GM10248 (cell line): ENCODE measurements at regions of chr9 and their contacts with region 1.

Region 1: GRCh38 chr9:86350006-86350760 is 4.0 kb downstream of the TUT7 start:
- DNase-seq: peak; percentile 46
- CTCF ChIP-seq: no peak

Region 2: DNA sequence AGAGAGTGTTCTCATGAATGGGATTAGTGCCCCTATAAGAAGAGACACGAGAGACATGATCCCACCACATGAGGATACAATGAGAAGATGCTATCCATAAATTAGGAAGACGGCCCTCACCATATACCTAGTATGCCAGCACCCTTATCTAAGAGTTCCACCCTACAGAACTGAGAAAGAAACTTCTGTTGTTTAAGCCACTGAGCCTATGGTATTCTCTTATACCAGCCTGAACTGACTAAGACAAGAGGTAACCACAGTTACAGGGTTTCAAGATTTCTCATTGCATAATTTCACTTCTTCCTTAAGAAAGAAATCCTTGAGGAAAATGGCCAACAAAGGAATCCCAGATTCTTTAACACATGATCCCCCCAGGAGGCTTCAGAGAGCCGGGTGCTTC is 1268.2 kb before region 1 on chr9:
- CTCF ChIA-PET with region 1: no interaction called
- POLR2A ChIA-PET with region 1: interaction called, 11 read pairs
- DNase-seq: no peak
- CTCF ChIP-seq: no peak

Region 3: GRCh38 chr9:86246752-86247161 is 103.4 kb before region 1 on chr9:
- CTCF ChIA-PET with region 1: no interaction called
- POLR2A ChIA-PET with region 1: no interaction called
- DNase-seq: peak; percentile 45
- CTCF ChIP-seq: peak; percentile 50